Activated CD8-positive, alpha-beta memory T cell treated with anti-CD3 and anti-CD28 coated beads, Interleukin-2, amount 10 ng/mL, durations not matched to agents 7 days and 5 days (primary cell): ENCODE measurements at regions of chr7 and their contacts with region 1.

Region 1: DNA sequence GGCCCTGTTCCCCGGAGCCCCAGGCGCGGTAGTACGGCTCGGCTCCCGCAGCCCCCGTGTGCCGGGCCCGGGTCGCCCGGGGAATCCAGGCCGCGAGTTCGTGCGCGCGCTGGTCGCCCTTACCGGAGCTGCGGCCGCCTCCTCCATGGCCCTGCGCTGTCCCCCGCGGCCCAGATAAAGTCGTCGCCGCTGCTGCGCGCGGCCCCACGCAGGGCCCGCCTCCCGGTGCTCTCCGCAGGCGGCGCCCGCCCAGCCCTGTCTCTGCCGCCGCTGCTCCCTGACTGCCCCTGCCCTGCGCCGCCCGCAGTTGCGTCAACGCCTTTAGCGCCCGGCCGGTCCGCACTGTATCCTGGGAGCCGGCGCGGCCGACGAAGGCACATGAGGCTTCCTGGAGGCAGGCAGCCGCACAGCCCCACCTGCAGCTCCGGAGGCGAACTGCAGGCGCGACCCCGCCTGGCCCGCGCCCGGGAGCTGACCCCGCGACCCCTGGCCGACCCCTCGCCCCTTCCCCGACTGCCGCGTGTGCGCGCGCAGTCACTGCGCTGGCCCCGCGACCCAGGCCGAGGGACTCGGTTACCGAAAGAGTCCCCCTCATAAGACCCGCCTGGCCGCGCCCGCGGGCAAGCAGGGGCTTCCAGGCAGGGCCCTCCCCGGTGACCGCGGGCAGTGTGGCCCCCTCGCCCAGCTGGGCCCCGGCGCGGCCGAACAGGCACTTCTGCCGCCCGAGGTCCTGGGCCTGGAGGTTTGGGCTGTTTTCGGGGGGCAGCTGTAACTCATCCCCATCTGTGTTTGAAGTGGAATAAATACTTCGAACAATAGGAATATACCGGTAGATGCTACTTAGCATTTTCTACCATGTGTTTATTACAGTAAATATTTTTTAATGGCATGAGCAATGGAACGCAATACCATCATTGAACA is 127.1 kb upstream of the ZNF746 start:
- DNase-seq: peak; percentile 94
- ATAC-seq: peak; percentile 92
- H3K4me3 Mint-ChIP-seq: peak overlapping the region; percentile 80
- H3K27ac Mint-ChIP-seq: peak overlapping the region; percentile 84
- H3K4me1 Mint-ChIP-seq: peaks cover 45% of the 10 kb centered on the region
- H3K27me3 Mint-ChIP-seq: peaks cover 21% of the 10 kb centered on the region

Region 2: DNA sequence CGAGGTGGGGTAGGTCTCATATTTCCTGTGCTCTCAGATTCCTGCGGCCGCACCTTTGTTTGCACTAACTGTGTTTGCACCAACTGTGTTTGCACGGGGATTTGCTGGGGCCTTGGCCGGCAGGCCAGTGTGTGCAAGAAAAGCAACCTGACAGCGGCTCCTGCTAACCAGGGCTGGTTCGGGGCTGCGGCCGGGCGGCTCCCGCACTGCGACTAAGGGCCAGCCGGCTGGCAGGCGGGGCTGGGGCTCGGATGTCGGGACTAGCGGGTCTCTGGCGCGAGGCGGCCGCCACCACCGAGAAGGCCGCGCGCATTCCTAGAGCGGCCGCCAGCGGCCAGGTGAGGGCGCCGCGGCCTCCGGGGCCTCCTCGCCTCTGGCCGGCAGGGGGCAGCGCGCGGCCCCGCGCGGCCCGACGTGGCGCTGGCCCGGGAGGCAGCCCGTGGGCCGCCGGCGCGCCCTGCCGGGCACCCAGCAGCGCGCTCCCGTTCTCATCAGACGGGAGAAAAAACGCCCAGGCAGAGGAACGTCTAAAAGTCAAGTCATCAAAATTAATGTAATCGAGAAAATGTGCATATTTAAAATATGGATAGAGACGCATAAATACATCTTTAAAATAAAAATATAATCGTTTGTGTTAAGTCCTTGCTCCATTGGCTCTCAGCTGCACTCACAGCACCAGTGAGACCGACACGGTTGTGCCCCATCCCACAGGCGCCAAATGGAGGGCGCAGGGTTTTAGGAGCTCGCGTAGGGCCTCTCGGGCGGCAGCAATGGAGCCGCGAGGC is 202.4 kb before region 1 on chr7:
- CTCF ChIA-PET with region 1: interaction called, 16 read pairs
- DNase-seq: peak; percentile 74
- ATAC-seq: peak; percentile 98
- H3K4me3 Mint-ChIP-seq: peak overlapping the region; percentile 69
- H3K27ac Mint-ChIP-seq: peak overlapping the region; percentile 36
- H3K4me1 Mint-ChIP-seq: peaks cover 13% of the 10 kb centered on the region
- H3K27me3 Mint-ChIP-seq: peaks cover 15% of the 10 kb centered on the region

Region 3: GRCh38 chr7:149460493-149461277 is 164.0 kb before region 1 on chr7 and contains the start of gene ZNF777:
- CTCF ChIA-PET with region 1: interaction called, 10 read pairs
- DNase-seq: peak; percentile 90
- ATAC-seq: peak; percentile 98
- H3K4me3 Mint-ChIP-seq: peak within 1 kb of the TSS; percentile 79
- H3K27ac Mint-ChIP-seq: peak within 1 kb of the TSS; percentile 79
- H3K4me1 Mint-ChIP-seq: peaks cover 17% of the 10 kb centered on the region
- H3K27me3 Mint-ChIP-seq: peaks cover 18% of the 10 kb centered on the region
- total RNA-seq, gene ZNF777: 12.1 to 15.2 TPM

Region 4: DNA sequence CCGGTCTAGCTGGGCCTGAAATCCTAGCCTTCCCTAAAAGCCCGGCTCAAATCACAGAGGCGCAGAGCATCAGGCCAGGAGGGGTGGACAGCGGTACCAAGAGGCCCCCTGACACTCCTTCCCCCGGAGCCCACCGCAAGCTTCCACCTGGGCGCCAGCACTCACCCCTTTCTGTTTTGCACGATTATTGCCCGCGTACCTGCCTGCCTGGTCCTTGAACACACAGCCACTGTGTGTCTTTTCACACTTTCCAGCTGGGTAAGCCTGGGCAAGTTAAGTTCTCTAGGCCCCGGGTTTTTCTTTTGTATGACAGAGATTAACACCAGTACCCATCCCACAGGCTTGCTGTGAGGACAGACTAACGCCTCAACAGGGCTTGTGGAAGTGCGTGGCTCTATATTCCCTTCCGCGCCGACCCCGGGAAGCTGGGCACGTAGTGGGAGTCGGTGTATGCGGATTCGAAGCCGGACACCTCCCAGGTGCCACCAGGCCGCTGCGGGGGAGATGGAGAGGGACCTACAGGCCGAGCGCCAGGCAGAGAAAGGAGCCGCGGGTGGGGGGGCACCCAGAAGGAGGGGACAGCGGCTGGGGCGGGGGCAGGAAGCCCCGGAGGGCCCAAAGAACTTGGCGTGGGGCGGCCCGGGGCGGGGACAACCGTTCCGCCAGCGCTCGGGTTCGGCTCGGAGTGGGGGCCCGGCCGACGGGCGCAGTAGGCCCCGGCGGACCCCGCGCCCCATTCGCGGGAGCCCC is 127.9 kb before region 1 on chr7:
- CTCF ChIA-PET with region 1: interaction called, 15 read pairs
- DNase-seq: peak; percentile 70
- ATAC-seq: peak; percentile 38
- H3K4me3 Mint-ChIP-seq: peak overlapping the region; percentile 94
- H3K27ac Mint-ChIP-seq: peak overlapping the region; percentile 92
- H3K4me1 Mint-ChIP-seq: peaks cover 47% of the 10 kb centered on the region
- H3K27me3 Mint-ChIP-seq: no peaks in the 10 kb centered on the region

Region 5: GRCh38 chr7:149547126-149547525 is 77.6 kb before region 1 on chr7:
- CTCF ChIA-PET with region 1: no interaction called
- DNase-seq: no peak
- ATAC-seq: no peak
- H3K4me3 Mint-ChIP-seq: no peak overlapping the region
- H3K27ac Mint-ChIP-seq: no peak overlapping the region
- H3K4me1 Mint-ChIP-seq: peaks cover 2% of the 10 kb centered on the region
- H3K27me3 Mint-ChIP-seq: no peaks in the 10 kb centered on the region

Region 6: GRCh38 chr7:149604521-149604920 is 20.2 kb before region 1 on chr7:
- CTCF ChIA-PET with region 1: interaction called, 14 read pairs
- DNase-seq: no peak
- ATAC-seq: no peak
- H3K4me3 Mint-ChIP-seq: no peak overlapping the region
- H3K27ac Mint-ChIP-seq: no peak overlapping the region
- H3K4me1 Mint-ChIP-seq: peaks cover 25% of the 10 kb centered on the region
- H3K27me3 Mint-ChIP-seq: peaks cover 11% of the 10 kb centered on the region

Region 7: DNA sequence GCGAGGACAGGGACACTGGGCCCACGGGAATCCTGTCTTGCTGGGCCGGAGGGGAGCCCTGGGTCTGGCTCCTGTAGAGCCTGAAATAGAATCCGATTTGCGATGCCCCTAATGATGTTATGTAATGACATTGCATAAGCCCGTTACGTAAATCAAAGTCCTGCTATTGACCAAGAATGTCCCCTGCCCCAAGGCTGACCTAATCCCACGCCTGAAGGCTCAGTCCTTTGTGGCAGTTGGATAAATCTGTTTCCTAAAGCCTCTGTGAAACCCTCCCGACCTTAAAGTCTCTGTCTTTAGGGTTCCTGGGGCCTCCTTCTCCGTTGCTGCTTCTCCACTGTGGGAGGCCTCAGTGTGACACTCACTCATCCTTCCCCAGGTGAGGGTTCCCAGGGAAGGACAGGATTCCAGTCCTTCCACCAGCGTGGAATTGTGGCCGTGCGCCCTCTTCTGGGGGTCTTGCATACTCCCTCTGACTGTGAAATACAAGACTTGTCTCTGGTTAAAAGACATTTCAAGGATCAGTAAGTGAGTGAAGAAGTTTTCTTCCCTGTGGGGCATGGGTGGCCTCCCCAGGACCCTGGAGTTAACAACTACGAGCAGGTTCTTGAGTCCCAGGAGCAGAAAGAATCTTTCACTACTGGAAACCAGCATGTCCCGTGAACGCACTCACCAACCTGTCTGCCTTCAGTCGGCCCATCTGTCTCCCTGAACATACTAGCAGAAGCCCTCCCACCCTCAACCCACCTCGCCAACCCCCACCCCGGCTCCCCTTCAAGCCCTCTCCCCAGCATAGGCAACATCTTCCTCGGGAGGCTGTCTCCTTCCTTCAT is 128.9 kb after region 1 on chr7:
- CTCF ChIA-PET with region 1: no interaction called
- DNase-seq: no peak
- ATAC-seq: no peak
- H3K4me3 Mint-ChIP-seq: no peak overlapping the region
- H3K27ac Mint-ChIP-seq: no peak overlapping the region
- H3K4me1 Mint-ChIP-seq: no peaks in the 10 kb centered on the region
- H3K27me3 Mint-ChIP-seq: no peaks in the 10 kb centered on the region